GM12878 (cell line): ENCODE measurements at regions of chr13 and their contacts with region 1.

Region 1: GRCh38 chr13:30865123-30866049 is 40.7 kb upstream of the MEDAG start:
- DNase-seq: no peak
- ATAC-seq: peak; percentile 98
- H3K4me3 ChIP-seq: no peak overlapping the region
- H3K27ac ChIP-seq: no peak overlapping the region
- H3K4me1 ChIP-seq: no peaks in the 10 kb centered on the region
- H3K27me3 ChIP-seq: peaks cover 0 to 4% of the 10 kb centered on the region in 2 experiments; a peak in 2 of 4 replicates
- CTCF ChIP-seq: peak; percentile 91 to 92 (median 92)
- EP300 ChIP-seq: no peak
- POLR2A ChIP-seq: no peak
- RAD21 ChIP-seq: peak; percentile 93

Region 2: DNA sequence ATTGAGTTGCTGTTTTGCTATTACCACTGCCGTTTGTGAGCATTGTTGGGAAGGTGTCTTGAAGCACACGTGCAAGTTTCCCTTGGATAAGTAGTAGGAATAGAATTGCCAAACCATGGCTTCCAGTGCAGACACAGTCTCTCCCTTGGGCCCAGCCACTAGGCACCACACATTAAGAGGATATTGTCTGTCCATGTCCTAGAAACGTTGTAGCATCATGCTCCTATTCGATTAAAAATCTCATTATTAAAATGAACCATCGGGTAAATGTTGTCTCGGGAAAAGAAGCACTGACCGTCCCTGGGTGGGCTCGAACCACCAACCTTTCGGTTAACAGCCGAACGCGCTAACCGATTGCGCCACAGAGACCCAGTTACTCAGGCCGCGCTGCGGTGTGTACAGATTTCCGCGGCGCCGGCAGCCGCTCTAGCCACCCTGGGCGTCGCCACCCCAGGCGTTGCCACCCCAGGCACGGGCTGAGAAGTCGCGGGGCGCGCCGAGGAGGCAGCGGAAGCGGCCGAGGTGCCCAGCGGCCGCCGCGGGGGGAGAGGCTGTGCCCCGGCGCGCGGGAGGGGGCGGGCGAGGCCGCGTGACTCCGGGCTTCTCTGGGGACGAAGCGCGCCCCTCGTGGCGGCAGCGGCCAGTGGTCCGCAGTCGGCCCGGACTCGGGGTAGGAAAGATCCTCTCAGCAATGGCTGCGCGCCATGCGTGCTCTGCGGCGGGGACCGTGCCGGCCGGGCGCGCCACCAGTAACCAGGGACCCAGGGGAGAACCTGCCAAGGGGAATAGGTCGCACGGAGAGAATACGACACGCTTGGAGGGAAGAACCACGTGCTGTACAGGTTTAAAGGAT is 191.5 kb before region 1 on chr13:
- CTCF ChIA-PET with region 1: interaction called, 3 read pairs
- POLR2A ChIA-PET with region 1: no interaction called
- RAD21 ChIA-PET with region 1: no interaction called
- SMC1A ChIA-PET with region 1: no interaction called
- in situ Hi-C with region 1: no loop called
- intact Hi-C with region 1: loop called (anchors 5 kb)
- DNase-seq: peak; percentile 67
- ATAC-seq: peak; percentile 99
- H3K4me3 ChIP-seq: peak overlapping the region; percentile 54; the same call in 1 of the 2 replicates
- H3K27ac ChIP-seq: no peak overlapping the region
- H3K4me1 ChIP-seq: no peaks in the 10 kb centered on the region
- H3K27me3 ChIP-seq: no peaks in the 10 kb centered on the region
- CTCF ChIP-seq: peak; percentile 64 to 73 (median 71)
- EP300 ChIP-seq: peak in 1 of 2 experiments; percentile 50; a peak in 1 of 4 replicates
- POLR2A ChIP-seq: peak; percentile 57
- RAD21 ChIP-seq: peak; percentile 41

Region 3: DNA sequence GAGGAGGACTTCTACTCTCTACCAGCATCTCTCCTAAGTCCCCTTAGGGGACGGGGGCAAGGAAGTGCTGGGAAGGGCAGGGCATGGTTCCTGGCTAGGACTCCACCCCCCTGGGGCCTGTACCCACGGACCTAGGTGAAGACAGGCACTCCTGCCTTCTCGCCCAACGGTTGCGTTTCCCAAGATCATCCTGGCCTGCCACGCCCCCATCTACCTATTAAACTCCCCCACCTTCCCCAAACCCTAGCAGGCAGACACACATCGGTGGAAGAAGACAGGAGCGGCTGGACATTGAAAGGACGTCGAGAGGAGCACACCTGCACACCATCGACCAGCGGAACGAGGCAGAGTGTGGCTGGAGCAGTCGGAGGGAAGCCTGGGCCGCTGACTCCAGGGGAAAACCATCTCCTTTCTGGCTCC is 175.7 kb before region 1 on chr13:
- CTCF ChIA-PET with region 1: no interaction called
- POLR2A ChIA-PET with region 1: no interaction called
- RAD21 ChIA-PET with region 1: no interaction called
- SMC1A ChIA-PET with region 1: no interaction called
- in situ Hi-C with region 1: no loop called
- intact Hi-C with region 1: no loop called
- DNase-seq: no peak
- ATAC-seq: no peak
- H3K4me3 ChIP-seq: no peak overlapping the region
- H3K27ac ChIP-seq: no peak overlapping the region
- H3K4me1 ChIP-seq: no peaks in the 10 kb centered on the region
- H3K27me3 ChIP-seq: 0 out of 4 replicates have a peak, but pooled peaks cover 0 to 2% of the 10 kb centered on the region in 2 experiments
- CTCF ChIP-seq: no peak
- EP300 ChIP-seq: no peak
- POLR2A ChIP-seq: no peak
- RAD21 ChIP-seq: no peak

Region 4: DNA sequence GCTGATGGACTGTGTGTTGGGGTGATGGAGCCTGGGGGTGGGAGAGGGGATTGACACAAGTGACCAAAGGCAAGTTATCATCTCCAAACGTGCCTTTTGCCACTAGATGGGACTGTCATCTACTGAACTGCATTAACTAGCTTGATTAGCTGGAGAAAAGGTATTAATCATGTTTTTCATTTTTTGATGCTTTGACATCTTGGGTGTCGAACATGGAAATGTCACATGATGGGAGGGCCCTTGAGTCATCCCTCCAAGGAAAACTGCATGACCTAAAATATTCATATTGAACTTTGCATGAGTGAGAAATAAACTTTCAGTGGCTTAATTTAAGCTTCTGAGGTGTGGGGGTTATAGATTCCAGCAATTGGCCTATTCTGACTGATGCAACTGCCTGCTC is 56.8 kb before region 1 on chr13:
- CTCF ChIA-PET with region 1: interaction called, 12 read pairs
- POLR2A ChIA-PET with region 1: no interaction called
- RAD21 ChIA-PET with region 1: interaction called, 10 read pairs
- SMC1A ChIA-PET with region 1: interaction called, 5 read pairs
- in situ Hi-C with region 1: no loop called
- intact Hi-C with region 1: loop called (anchors 5 kb)
- DNase-seq: no peak
- ATAC-seq: no peak
- H3K4me3 ChIP-seq: no peak overlapping the region
- H3K27ac ChIP-seq: no peak overlapping the region
- H3K4me1 ChIP-seq: no peaks in the 10 kb centered on the region
- H3K27me3 ChIP-seq: no peaks in the 10 kb centered on the region; a peak in 1 of 4 replicates
- CTCF ChIP-seq: peak in 1 of 3 experiments; percentile 24; a peak in 2 of 6 replicates
- EP300 ChIP-seq: no peak
- POLR2A ChIP-seq: no peak
- RAD21 ChIP-seq: peak; percentile 34; the same call in 1 of the 2 replicates

Region 5: GRCh38 chr13:30847650-30848307 is 17.6 kb before region 1 on chr13:
- CTCF ChIA-PET with region 1: interaction called, 19 read pairs
- POLR2A ChIA-PET with region 1: no interaction called
- RAD21 ChIA-PET with region 1: no interaction called
- SMC1A ChIA-PET with region 1: interaction called, 3 read pairs
- in situ Hi-C with region 1: no loop called
- intact Hi-C with region 1: no loop called
- DNase-seq: peak; percentile 40
- ATAC-seq: peak; percentile 48
- H3K4me3 ChIP-seq: no peak overlapping the region
- H3K27ac ChIP-seq: no peak overlapping the region
- H3K4me1 ChIP-seq: peaks cover 14% of the 10 kb centered on the region
- H3K27me3 ChIP-seq: no peaks in the 10 kb centered on the region
- CTCF ChIP-seq: no peak
- EP300 ChIP-seq: no peak
- POLR2A ChIP-seq: no peak
- RAD21 ChIP-seq: no peak

Region 6: DNA sequence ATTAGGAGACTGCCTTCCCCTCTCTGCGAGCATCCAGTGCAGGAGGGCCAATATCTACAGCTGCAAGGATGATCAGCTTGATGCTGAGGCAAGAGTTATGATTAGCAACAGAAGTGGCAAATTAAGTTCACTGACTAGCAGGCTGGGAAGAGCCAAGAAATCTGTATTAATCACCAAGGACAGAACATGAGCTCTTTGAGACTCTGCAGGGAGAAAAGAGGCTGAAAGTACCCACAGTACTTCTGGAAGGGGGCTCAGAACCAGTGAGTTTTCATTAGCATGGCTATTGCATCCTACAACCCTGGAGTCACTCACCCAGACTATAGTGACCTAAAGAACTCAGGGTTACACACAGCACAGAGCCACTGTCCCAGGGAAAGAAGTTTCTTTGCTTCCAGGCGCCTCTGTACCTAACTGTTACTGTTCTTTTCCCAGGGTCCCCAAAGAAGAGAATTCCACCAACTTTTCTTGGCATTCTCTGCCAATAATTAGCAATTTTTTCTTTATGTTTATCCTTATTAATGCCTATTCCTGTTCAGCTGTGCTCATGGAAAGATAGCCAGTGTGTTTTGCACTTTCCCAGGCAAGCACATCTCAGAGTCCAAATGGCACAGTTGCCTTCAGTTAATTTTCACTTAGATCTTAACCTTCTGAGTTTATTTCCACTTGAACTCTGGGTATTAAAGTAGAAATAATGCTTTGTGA is 14.9 kb after region 1 on chr13:
- CTCF ChIA-PET with region 1: interaction called, 23 read pairs
- POLR2A ChIA-PET with region 1: no interaction called
- RAD21 ChIA-PET with region 1: no interaction called
- SMC1A ChIA-PET with region 1: interaction called, 3 read pairs
- in situ Hi-C with region 1: no loop called
- intact Hi-C with region 1: no loop called
- DNase-seq: no peak
- ATAC-seq: no peak
- H3K4me3 ChIP-seq: no peak overlapping the region
- H3K27ac ChIP-seq: no peak overlapping the region
- H3K4me1 ChIP-seq: no peaks in the 10 kb centered on the region
- H3K27me3 ChIP-seq: peaks cover 1 to 11% of the 10 kb centered on the region in 2 experiments
- CTCF ChIP-seq: no peak
- EP300 ChIP-seq: no peak
- POLR2A ChIP-seq: no peak
- RAD21 ChIP-seq: no peak

Region 7: GRCh38 chr13:30963791-30964190 is 98.4 kb after region 1 on chr13:
- CTCF ChIA-PET with region 1: no interaction called
- POLR2A ChIA-PET with region 1: no interaction called
- RAD21 ChIA-PET with region 1: no interaction called
- SMC1A ChIA-PET with region 1: no interaction called
- in situ Hi-C with region 1: no loop called
- intact Hi-C with region 1: no loop called
- DNase-seq: no peak
- ATAC-seq: no peak
- H3K4me3 ChIP-seq: no peak overlapping the region
- H3K27ac ChIP-seq: no peak overlapping the region
- H3K4me1 ChIP-seq: no peaks in the 10 kb centered on the region
- H3K27me3 ChIP-seq: no peaks in the 10 kb centered on the region
- CTCF ChIP-seq: no peak
- EP300 ChIP-seq: no peak
- POLR2A ChIP-seq: no peak
- RAD21 ChIP-seq: no peak

Region 8: GRCh38 chr13:31105020-31105795 is 239.8 kb after region 1 on chr13:
- CTCF ChIA-PET with region 1: no interaction called
- POLR2A ChIA-PET with region 1: no interaction called
- RAD21 ChIA-PET with region 1: no interaction called
- SMC1A ChIA-PET with region 1: no interaction called
- in situ Hi-C with region 1: no loop called
- intact Hi-C with region 1: no loop called
- DNase-seq: no peak
- ATAC-seq: no peak
- H3K4me3 ChIP-seq: no peak overlapping the region
- H3K27ac ChIP-seq: no peak overlapping the region
- H3K4me1 ChIP-seq: no peaks in the 10 kb centered on the region
- H3K27me3 ChIP-seq: peaks cover 0 to 1% of the 10 kb centered on the region in 2 experiments; a peak in 2 of 4 replicates
- CTCF ChIP-seq: no peak
- EP300 ChIP-seq: no peak
- POLR2A ChIP-seq: no peak
- RAD21 ChIP-seq: no peak

Region 9: DNA sequence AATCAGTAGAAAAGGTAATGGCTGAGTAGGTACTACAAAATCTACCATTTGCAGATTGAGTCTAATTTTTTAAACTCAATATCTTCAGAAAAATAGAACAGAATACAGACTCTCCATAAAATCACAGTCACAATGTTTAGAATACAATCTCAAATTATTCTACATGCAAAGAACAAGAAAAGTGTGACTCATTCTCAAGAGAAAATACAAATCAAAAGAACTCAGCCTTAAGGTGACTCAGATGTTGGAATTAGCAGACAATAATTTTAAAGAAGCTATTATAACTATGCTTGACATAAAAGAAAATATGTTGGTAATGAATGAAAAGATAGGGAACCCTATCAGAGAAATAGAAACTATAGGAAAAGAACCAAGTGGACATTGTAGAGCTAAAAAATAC is 952.9 kb after region 1 on chr13:
- CTCF ChIA-PET with region 1: no interaction called
- POLR2A ChIA-PET with region 1: no interaction called
- RAD21 ChIA-PET with region 1: no interaction called
- SMC1A ChIA-PET with region 1: no interaction called
- in situ Hi-C with region 1: no loop called
- intact Hi-C with region 1: no loop called
- DNase-seq: no peak
- ATAC-seq: no peak
- H3K4me3 ChIP-seq: no peak overlapping the region
- H3K27ac ChIP-seq: no peak overlapping the region
- H3K4me1 ChIP-seq: no peaks in the 10 kb centered on the region
- H3K27me3 ChIP-seq: no peaks in the 10 kb centered on the region
- CTCF ChIP-seq: no peak
- EP300 ChIP-seq: no peak
- POLR2A ChIP-seq: no peak
- RAD21 ChIP-seq: no peak